B cell (primary cell): ENCODE measurements at regions of chr18 and their contacts with region 1.

Region 1: DNA sequence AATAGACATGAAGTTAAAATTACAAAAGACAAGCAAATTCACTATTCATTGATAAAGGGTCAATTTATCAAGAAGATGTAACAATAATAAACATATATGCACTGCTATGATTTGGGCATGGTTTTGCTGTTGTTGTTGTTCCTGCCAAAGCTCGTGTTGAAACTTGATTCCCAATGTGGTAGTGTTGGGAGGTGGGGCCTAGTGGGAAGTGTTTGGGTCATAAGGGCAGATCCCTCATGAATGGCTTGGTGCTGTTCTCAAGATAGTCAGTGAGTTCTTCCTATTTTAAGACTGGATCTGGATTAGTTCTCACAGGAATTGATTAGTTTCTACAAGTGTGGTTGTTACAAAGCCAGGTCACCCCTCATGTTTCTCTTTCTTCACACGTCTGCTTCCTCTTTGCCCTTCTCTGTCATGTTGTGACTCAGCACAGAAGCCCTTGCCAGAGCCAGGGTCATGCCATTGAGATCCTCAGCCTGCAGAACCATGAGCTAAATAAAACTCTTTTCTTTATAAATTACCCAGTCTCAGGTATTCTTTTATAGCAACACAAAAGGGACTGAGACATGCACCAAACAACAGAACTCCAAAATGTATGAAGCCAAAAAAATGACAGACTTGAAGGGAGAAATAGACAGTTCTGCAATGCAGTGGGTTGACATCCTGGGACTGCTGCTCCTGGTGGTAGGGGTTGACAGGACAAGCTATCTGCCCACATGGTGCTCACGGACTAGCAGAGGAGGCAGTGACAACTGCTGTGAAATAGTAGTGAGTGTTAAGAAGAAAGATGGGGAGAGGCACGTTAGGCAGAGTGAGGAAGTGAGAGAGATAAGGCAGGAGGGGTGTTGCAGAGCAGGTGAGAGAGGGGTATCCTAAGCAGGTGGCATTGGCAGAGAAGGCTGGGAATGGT is 18.6 kb upstream of the SKA1 start:
- DNase-seq: peak; percentile 63
- ATAC-seq: peak; percentile 55
- H3K4me3 ChIP-seq: no peak overlapping the region
- H3K4me3 Mint-ChIP-seq: peak overlapping the region; percentile 11
- H3K27ac ChIP-seq: peak overlapping the region in 1 of 2 donors; percentile 21
- H3K27ac Mint-ChIP-seq: peak overlapping the region; percentile 33
- H3K4me1 ChIP-seq: peaks cover 13 to 14% of the 10 kb centered on the region in 2 donors
- H3K4me1 Mint-ChIP-seq: peaks cover 14% of the 10 kb centered on the region
- H3K27me3 ChIP-seq: peaks cover 0 to 4% (median under 1%) of the 10 kb centered on the region in 4 experiments
- H3K27me3 Mint-ChIP-seq: peaks cover 28% of the 10 kb centered on the region
- CTCF ChIP-seq: no peak

Region 2: GRCh38 chr18:50009773-50010335 is 346.4 kb before region 1 on chr18:
- CTCF ChIA-PET with region 1: interaction called, 12 read pairs
- POLR2A ChIA-PET with region 1: no interaction called
- intact Hi-C with region 1: loop called (anchors 2 kb)
- DNase-seq: peak; percentile 66
- ATAC-seq: peak; percentile 47
- H3K4me3 ChIP-seq: no peak overlapping the region
- H3K4me3 Mint-ChIP-seq: no peak overlapping the region
- H3K27ac ChIP-seq: no peak overlapping the region
- H3K27ac Mint-ChIP-seq: no peak overlapping the region
- H3K4me1 ChIP-seq: no peaks in the 10 kb centered on the region
- H3K4me1 Mint-ChIP-seq: no peaks in the 10 kb centered on the region
- H3K27me3 ChIP-seq: no peaks in the 10 kb centered on the region
- H3K27me3 Mint-ChIP-seq: peaks cover 22% of the 10 kb centered on the region
- CTCF ChIP-seq: peak; percentile 62

Region 3: GRCh38 chr18:50203801-50204604 is 152.3 kb before region 1 on chr18:
- CTCF ChIA-PET with region 1: interaction called, 12 read pairs
- POLR2A ChIA-PET with region 1: no interaction called
- intact Hi-C with region 1: no loop called
- DNase-seq: peak; percentile 32
- ATAC-seq: no peak
- H3K4me3 ChIP-seq: no peak overlapping the region
- H3K4me3 Mint-ChIP-seq: no peak overlapping the region
- H3K27ac ChIP-seq: no peak overlapping the region
- H3K27ac Mint-ChIP-seq: no peak overlapping the region
- H3K4me1 ChIP-seq: peaks cover 5 to 6% of the 10 kb centered on the region in 2 donors
- H3K4me1 Mint-ChIP-seq: peaks cover 5% of the 10 kb centered on the region
- H3K27me3 ChIP-seq: peaks cover 0 to 38% (median 23%) of the 10 kb centered on the region in 4 experiments
- H3K27me3 Mint-ChIP-seq: peaks cover 67% of the 10 kb centered on the region
- CTCF ChIP-seq: peak; percentile 29

Region 4: GRCh38 chr18:50266248-50266704 is 90.0 kb before region 1 on chr18 and contains the start of gene CFAP53:
- CTCF ChIA-PET with region 1: interaction called, 75 read pairs
- POLR2A ChIA-PET with region 1: interaction called, 10 read pairs
- intact Hi-C with region 1: loop called (anchors 1 kb)
- DNase-seq: peak; percentile 96
- ATAC-seq: peak; percentile 79
- H3K4me3 ChIP-seq: peak within 1 kb of the TSS; percentile 55 to 78 (median 66)
- H3K4me3 Mint-ChIP-seq: peak within 1 kb of the TSS; percentile 93
- H3K27ac ChIP-seq: peak within 1 kb of the TSS; percentile 57 to 81
- H3K27ac Mint-ChIP-seq: peak within 1 kb of the TSS; percentile 93
- H3K4me1 ChIP-seq: peaks cover 15 to 28% of the 10 kb centered on the region in 2 donors
- H3K4me1 Mint-ChIP-seq: peaks cover 23% of the 10 kb centered on the region
- H3K27me3 ChIP-seq: no peaks in the 10 kb centered on the region
- H3K27me3 Mint-ChIP-seq: no peaks in the 10 kb centered on the region
- CTCF ChIP-seq: no peak
- total RNA-seq, gene CFAP53: 0.75 and 0.79 TPM in 2 replicates

Region 5: GRCh38 chr18:50287441-50288347 is 68.6 kb before region 1 on chr18 and contains the start of gene CXXC1:
- CTCF ChIA-PET with region 1: interaction called, 27 read pairs
- POLR2A ChIA-PET with region 1: no interaction called
- intact Hi-C with region 1: loop called (anchors 1 kb)
- DNase-seq: peak; percentile 99
- ATAC-seq: peak; percentile 91
- H3K4me3 ChIP-seq: peak within 1 kb of the TSS; percentile 64 to 97 (median 90)
- H3K4me3 Mint-ChIP-seq: peak within 1 kb of the TSS; percentile 98
- H3K27ac ChIP-seq: peak within 1 kb of the TSS; percentile 93
- H3K27ac Mint-ChIP-seq: peak within 1 kb of the TSS; percentile 94
- H3K4me1 ChIP-seq: peaks cover 8 to 13% of the 10 kb centered on the region in 2 donors
- H3K4me1 Mint-ChIP-seq: peaks cover 34% of the 10 kb centered on the region
- H3K27me3 ChIP-seq: no peaks in the 10 kb centered on the region
- H3K27me3 Mint-ChIP-seq: no peaks in the 10 kb centered on the region
- CTCF ChIP-seq: peak; percentile 42
- total RNA-seq, gene CXXC1: 136 and 157 TPM in 2 replicates

Region 6: GRCh38 chr18:50307738-50308470 is 48.4 kb before region 1 on chr18:
- CTCF ChIA-PET with region 1: interaction called, 15 read pairs
- POLR2A ChIA-PET with region 1: no interaction called
- intact Hi-C with region 1: loop called (anchors 2 kb)
- DNase-seq: peak; percentile 92
- ATAC-seq: peak; percentile 98
- H3K4me3 ChIP-seq: peak overlapping the region; percentile 30 to 70 (median 61)
- H3K4me3 Mint-ChIP-seq: peak overlapping the region; percentile 99
- H3K27ac ChIP-seq: peak overlapping the region; percentile 3 to 56
- H3K27ac Mint-ChIP-seq: peak overlapping the region; percentile 87
- H3K4me1 ChIP-seq: peaks cover 33 to 42% of the 10 kb centered on the region in 2 donors
- H3K4me1 Mint-ChIP-seq: peaks cover 38% of the 10 kb centered on the region
- H3K27me3 ChIP-seq: peaks cover 0 to 2% (median 0%) of the 10 kb centered on the region in 4 experiments
- H3K27me3 Mint-ChIP-seq: peaks cover 4% of the 10 kb centered on the region
- CTCF ChIP-seq: no peak

Region 7: GRCh38 chr18:50374753-50375391 is 18.6 kb after region 1 on chr18 and contains the start of gene SKA1:
- CTCF ChIA-PET with region 1: interaction called, 22 read pairs
- POLR2A ChIA-PET with region 1: interaction called, 6 read pairs
- intact Hi-C with region 1: loop called (anchors 1 kb)
- DNase-seq: peak; percentile 96
- ATAC-seq: peak; percentile 100
- H3K4me3 ChIP-seq: peak within 1 kb of the TSS; percentile 60 to 78 (median 72)
- H3K4me3 Mint-ChIP-seq: peak within 1 kb of the TSS; percentile 85
- H3K27ac ChIP-seq: peak within 1 kb of the TSS; percentile 66 to 83
- H3K27ac Mint-ChIP-seq: peak within 1 kb of the TSS; percentile 89
- H3K4me1 ChIP-seq: peaks cover 5 to 16% of the 10 kb centered on the region in 2 donors
- H3K4me1 Mint-ChIP-seq: peaks cover 15% of the 10 kb centered on the region
- H3K27me3 ChIP-seq: peaks cover 0 to 7% (median 3%) of the 10 kb centered on the region in 4 experiments
- H3K27me3 Mint-ChIP-seq: peaks cover 13% of the 10 kb centered on the region
- CTCF ChIP-seq: no peak
- total RNA-seq, gene SKA1: 0.52 and 0.66 TPM in 2 replicates